CD8-positive, alpha-beta T cell (primary cell): ENCODE measurements at regions of chr21 and their contacts with region 1.

Region 1: GRCh38 chr21:18449605-18450550 is 46.3 kb upstream of the TMPRSS15 start:
- DNase-seq: no peak
- ATAC-seq: no peak
- H3K4me3 ChIP-seq: no peak overlapping the region
- H3K4me3 Mint-ChIP-seq: no peak overlapping the region
- H3K27ac ChIP-seq: no peak overlapping the region
- H3K27ac Mint-ChIP-seq: no peak overlapping the region
- H3K4me1 ChIP-seq: no peaks in the 10 kb centered on the region
- H3K4me1 Mint-ChIP-seq: no peaks in the 10 kb centered on the region
- H3K27me3 ChIP-seq: no peaks in the 10 kb centered on the region
- H3K27me3 Mint-ChIP-seq: no peaks in the 10 kb centered on the region
- CTCF ChIP-seq: no peak

Region 2: GRCh38 chr21:18104802-18105201 is 345.1 kb before region 1 on chr21:
- CTCF ChIA-PET with region 1: no interaction called
- POLR2A ChIA-PET with region 1: no interaction called
- intact Hi-C with region 1: no loop called
- DNase-seq: no peak
- ATAC-seq: no peak
- H3K4me3 ChIP-seq: no peak overlapping the region
- H3K4me3 Mint-ChIP-seq: no peak overlapping the region
- H3K27ac ChIP-seq: no peak overlapping the region
- H3K27ac Mint-ChIP-seq: no peak overlapping the region
- H3K4me1 ChIP-seq: no peaks in the 10 kb centered on the region
- H3K4me1 Mint-ChIP-seq: no peaks in the 10 kb centered on the region
- H3K27me3 ChIP-seq: no peaks in the 10 kb centered on the region
- H3K27me3 Mint-ChIP-seq: no peaks in the 10 kb centered on the region
- CTCF ChIP-seq: no peak

Region 3: GRCh38 chr21:18398843-18399242 is 51.0 kb before region 1 on chr21:
- CTCF ChIA-PET with region 1: no interaction called
- POLR2A ChIA-PET with region 1: no interaction called
- intact Hi-C with region 1: loop called in 1 of 2 experiments (anchors 5 kb)
- DNase-seq: no peak
- ATAC-seq: no peak
- H3K4me3 ChIP-seq: no peak overlapping the region
- H3K4me3 Mint-ChIP-seq: no peak overlapping the region
- H3K27ac ChIP-seq: no peak overlapping the region
- H3K27ac Mint-ChIP-seq: no peak overlapping the region
- H3K4me1 ChIP-seq: no peaks in the 10 kb centered on the region
- H3K4me1 Mint-ChIP-seq: no peaks in the 10 kb centered on the region
- H3K27me3 ChIP-seq: no peaks in the 10 kb centered on the region
- H3K27me3 Mint-ChIP-seq: no peaks in the 10 kb centered on the region
- CTCF ChIP-seq: no peak

Region 4: GRCh38 chr21:18477043-18477442 is 27.2 kb after region 1 on chr21:
- CTCF ChIA-PET with region 1: no interaction called
- POLR2A ChIA-PET with region 1: no interaction called
- intact Hi-C with region 1: no loop called
- DNase-seq: no peak
- ATAC-seq: no peak
- H3K4me3 ChIP-seq: no peak overlapping the region
- H3K4me3 Mint-ChIP-seq: no peak overlapping the region
- H3K27ac ChIP-seq: no peak overlapping the region
- H3K27ac Mint-ChIP-seq: no peak overlapping the region
- H3K4me1 ChIP-seq: no peaks in the 10 kb centered on the region
- H3K4me1 Mint-ChIP-seq: no peaks in the 10 kb centered on the region
- H3K27me3 ChIP-seq: no peaks in the 10 kb centered on the region
- H3K27me3 Mint-ChIP-seq: no peaks in the 10 kb centered on the region
- CTCF ChIP-seq: no peak

Region 5: GRCh38 chr21:18608226-18608625 is 158.3 kb after region 1 on chr21:
- CTCF ChIA-PET with region 1: no interaction called
- POLR2A ChIA-PET with region 1: no interaction called
- intact Hi-C with region 1: no loop called
- DNase-seq: no peak
- ATAC-seq: no peak
- H3K4me3 ChIP-seq: no peak overlapping the region
- H3K4me3 Mint-ChIP-seq: no peak overlapping the region
- H3K27ac ChIP-seq: no peak overlapping the region
- H3K27ac Mint-ChIP-seq: no peak overlapping the region
- H3K4me1 ChIP-seq: no peaks in the 10 kb centered on the region
- H3K4me1 Mint-ChIP-seq: no peaks in the 10 kb centered on the region
- H3K27me3 ChIP-seq: no peaks in the 10 kb centered on the region
- H3K27me3 Mint-ChIP-seq: no peaks in the 10 kb centered on the region
- CTCF ChIP-seq: no peak

Region 6: GRCh38 chr21:19048098-19048672 is 598.3 kb after region 1 on chr21:
- CTCF ChIA-PET with region 1: no interaction called
- POLR2A ChIA-PET with region 1: no interaction called
- intact Hi-C with region 1: no loop called
- DNase-seq: no peak
- ATAC-seq: no peak
- H3K4me3 ChIP-seq: no peak overlapping the region
- H3K4me3 Mint-ChIP-seq: no peak overlapping the region
- H3K27ac ChIP-seq: no peak overlapping the region
- H3K27ac Mint-ChIP-seq: no peak overlapping the region
- H3K4me1 ChIP-seq: no peaks in the 10 kb centered on the region
- H3K4me1 Mint-ChIP-seq: no peaks in the 10 kb centered on the region
- H3K27me3 ChIP-seq: no peaks in the 10 kb centered on the region
- H3K27me3 Mint-ChIP-seq: no peaks in the 10 kb centered on the region
- CTCF ChIP-seq: no peak